SK-N-SH (cell line): ENCODE measurements at regions of chr12 and their contacts with region 1.

Region 1: DNA sequence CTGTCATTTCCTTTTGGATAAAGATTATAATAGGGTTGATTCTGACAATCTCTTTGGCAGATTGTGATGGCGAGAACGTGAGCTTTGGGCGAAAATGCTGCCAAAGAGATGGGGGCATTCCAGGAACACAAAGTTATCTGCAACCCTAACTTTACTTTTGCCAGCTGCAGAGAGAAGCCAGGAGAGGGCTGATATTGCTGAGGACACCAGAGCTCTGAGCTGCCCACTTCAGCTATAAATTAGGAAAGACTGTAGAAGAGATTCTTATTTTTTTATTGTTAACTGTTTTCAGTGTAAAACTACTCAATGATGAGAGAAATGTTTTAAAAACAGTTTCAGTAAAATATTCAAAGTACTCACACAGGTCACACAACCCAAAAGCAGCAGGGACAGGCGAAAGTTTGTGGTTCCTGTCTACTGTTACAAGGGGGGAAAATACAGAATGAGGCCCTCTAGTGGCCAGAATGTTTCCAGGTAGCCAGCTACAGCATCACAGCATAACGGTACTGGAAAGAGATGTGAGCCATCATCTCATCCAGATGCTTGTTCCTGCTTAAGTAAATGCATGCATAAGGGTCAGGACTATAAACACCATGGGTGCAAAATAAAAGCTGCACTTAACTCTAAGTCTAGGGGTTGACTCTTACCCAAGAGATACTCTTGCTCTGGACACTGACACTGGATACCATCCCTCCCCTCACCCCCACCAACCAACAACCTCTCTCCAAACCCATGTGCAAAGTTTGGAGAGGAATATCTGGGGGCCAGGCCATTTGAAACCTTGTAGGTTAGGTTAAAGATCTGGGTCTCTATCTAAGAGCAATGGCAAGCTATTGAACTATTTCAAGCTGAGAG is 498.4 kb downstream of the RMST start:
- DNase-seq: peak; percentile 19
- H3K4me3 ChIP-seq: no peak overlapping the region; a peak in 1 of 4 replicates
- H3K27ac ChIP-seq: no peak overlapping the region
- H3K4me1 ChIP-seq: no peaks in the 10 kb centered on the region
- H3K27me3 ChIP-seq: no peaks in the 10 kb centered on the region
- CTCF ChIP-seq: peak; percentile 64
- EP300 ChIP-seq: no peak
- RAD21 ChIP-seq: peak; percentile 51

Region 2: GRCh38 chr12:97944576-97944975 is 16.4 kb before region 1 on chr12:
- CTCF ChIA-PET with region 1: interaction called, 16 read pairs
- POLR2A ChIA-PET with region 1: no interaction called
- DNase-seq: no peak
- H3K4me3 ChIP-seq: no peak overlapping the region
- H3K27ac ChIP-seq: no peak overlapping the region
- H3K4me1 ChIP-seq: no peaks in the 10 kb centered on the region
- H3K27me3 ChIP-seq: no peaks in the 10 kb centered on the region
- CTCF ChIP-seq: no peak
- EP300 ChIP-seq: no peak
- RAD21 ChIP-seq: no peak

Region 3: GRCh38 chr12:98007963-98008362 is 47.0 kb after region 1 on chr12:
- CTCF ChIA-PET with region 1: interaction called, 11 read pairs
- POLR2A ChIA-PET with region 1: no interaction called
- DNase-seq: no peak
- H3K4me3 ChIP-seq: no peak overlapping the region
- H3K27ac ChIP-seq: no peak overlapping the region
- H3K4me1 ChIP-seq: no peaks in the 10 kb centered on the region
- H3K27me3 ChIP-seq: no peaks in the 10 kb centered on the region
- CTCF ChIP-seq: no peak
- EP300 ChIP-seq: no peak
- RAD21 ChIP-seq: no peak

Region 4: DNA sequence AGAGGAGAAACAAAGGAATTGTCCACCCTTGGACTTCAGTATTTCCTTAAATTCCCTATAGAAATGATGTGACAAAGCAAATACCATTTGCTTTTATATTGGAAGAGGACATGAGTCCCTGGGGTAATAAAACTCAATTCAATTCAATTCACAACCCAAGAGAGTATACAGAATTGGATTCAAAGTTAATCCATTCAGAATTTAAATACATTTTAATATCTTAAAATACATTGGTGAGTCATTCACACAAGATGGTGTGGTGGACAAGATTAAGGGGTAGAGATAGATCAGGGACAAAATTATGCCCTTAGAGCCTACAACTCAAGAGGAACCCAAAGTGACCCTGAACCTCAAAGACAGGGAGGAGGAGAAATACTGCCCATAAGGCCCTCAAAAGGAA is 59.4 kb after region 1 on chr12:
- CTCF ChIA-PET with region 1: no interaction called
- POLR2A ChIA-PET with region 1: no interaction called
- DNase-seq: no peak
- H3K4me3 ChIP-seq: no peak overlapping the region
- H3K27ac ChIP-seq: peak overlapping the region in 1 of 2 experiments; percentile 17; a peak in 1 of 4 replicates
- H3K4me1 ChIP-seq: peaks cover 3% of the 10 kb centered on the region in 2 experiments; a peak in 3 of 4 replicates
- H3K27me3 ChIP-seq: no peaks in the 10 kb centered on the region
- CTCF ChIP-seq: no peak
- EP300 ChIP-seq: no peak
- RAD21 ChIP-seq: no peak